T-cell (primary cell): ENCODE measurements at regions of chr3 and their contacts with region 1.

Region 1: GRCh38 chr3:45656575-45657363 is 32.4 kb upstream of the SACM1L start:
- DNase-seq: peak; percentile 67 to 92 (median 81)
- ATAC-seq: peak; percentile 83 to 94 (median 87)
- H3K4me3 ChIP-seq: no peak overlapping the region
- H3K4me3 Mint-ChIP-seq: no peak overlapping the region
- H3K27ac ChIP-seq: no peak overlapping the region
- H3K27ac Mint-ChIP-seq: no peak overlapping the region
- H3K4me1 ChIP-seq: peaks cover 0 to 5% of the 10 kb centered on the region in 2 experiments
- H3K4me1 Mint-ChIP-seq: peaks cover 16 to 33% (median 21%) of the 10 kb centered on the region in 3 donors
- H3K27me3 ChIP-seq: no peaks in the 10 kb centered on the region
- H3K27me3 Mint-ChIP-seq: no peaks in the 10 kb centered on the region

Region 2: DNA sequence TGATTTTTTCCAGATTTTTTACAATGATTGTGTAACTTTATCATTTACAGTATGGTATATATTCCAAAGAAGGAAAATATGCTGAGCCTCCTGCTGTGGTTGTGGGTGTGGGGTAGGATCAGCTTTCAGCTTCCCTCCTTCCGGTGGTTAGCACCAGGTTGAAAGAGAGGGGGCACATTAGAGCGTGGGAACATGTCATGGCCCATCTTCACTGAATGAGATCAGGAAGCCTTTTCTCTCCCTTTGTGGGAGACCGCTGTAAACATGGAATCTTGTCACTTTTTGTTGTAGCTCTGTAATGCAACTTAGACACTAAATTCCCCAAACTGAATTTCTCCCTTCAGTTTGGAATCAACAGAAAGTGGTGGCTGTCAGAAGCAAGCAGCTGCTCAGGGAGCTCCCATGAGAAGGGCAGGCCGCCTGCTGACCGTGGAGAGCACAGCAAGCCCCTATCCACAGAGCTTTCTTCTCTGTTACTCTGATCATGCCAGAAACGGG is 148.9 kb before region 1 on chr3:
- CTCF ChIA-PET with region 1: interaction called, 11 to 53 read pairs
- POLR2A ChIA-PET with region 1: no interaction called
- DNase-seq: no peak
- ATAC-seq: peak in 2 of 4 experiments; percentile 53 to 71
- H3K4me3 ChIP-seq: peak overlapping the region in 1 of 2 donors; percentile 32
- H3K4me3 Mint-ChIP-seq: no peak overlapping the region
- H3K27ac ChIP-seq: no peak overlapping the region
- H3K27ac Mint-ChIP-seq: no peak overlapping the region
- H3K4me1 ChIP-seq: peaks cover 5 to 23% of the 10 kb centered on the region in 2 experiments
- H3K4me1 Mint-ChIP-seq: peaks cover 3 to 10% (median 7%) of the 10 kb centered on the region in 3 donors
- H3K27me3 ChIP-seq: no peaks in the 10 kb centered on the region
- H3K27me3 Mint-ChIP-seq: no peaks in the 10 kb centered on the region

Region 3: DNA sequence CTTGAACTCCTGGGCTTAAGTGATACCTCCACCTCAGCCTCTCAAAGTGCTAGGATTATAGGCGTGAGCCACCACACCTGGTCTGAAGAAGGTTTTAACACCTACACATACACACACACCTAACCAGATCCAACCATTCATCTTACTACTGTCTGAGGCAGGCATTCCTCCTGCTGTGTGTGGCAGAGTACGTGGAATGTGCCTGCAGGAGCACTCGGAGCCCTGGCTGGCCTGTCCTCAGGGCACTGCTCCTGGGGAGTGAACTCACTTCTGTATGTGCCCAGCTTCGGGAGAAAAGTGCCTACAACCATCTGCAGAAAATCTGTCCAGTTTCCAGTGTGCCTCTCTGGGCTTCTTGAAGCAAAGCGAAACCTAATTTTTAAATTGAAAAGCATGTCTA is 120.4 kb before region 1 on chr3:
- CTCF ChIA-PET with region 1: no interaction called
- POLR2A ChIA-PET with region 1: no interaction called
- DNase-seq: no peak
- ATAC-seq: no peak
- H3K4me3 ChIP-seq: no peak overlapping the region
- H3K4me3 Mint-ChIP-seq: no peak overlapping the region
- H3K27ac ChIP-seq: no peak overlapping the region
- H3K27ac Mint-ChIP-seq: no peak overlapping the region
- H3K4me1 ChIP-seq: no peaks in the 10 kb centered on the region
- H3K4me1 Mint-ChIP-seq: no peaks in the 10 kb centered on the region
- H3K27me3 ChIP-seq: no peaks in the 10 kb centered on the region
- H3K27me3 Mint-ChIP-seq: no peaks in the 10 kb centered on the region

Region 4: GRCh38 chr3:45677033-45677433 is 20.3 kb after region 1 on chr3:
- CTCF ChIA-PET with region 1: interaction called, 8 to 11 read pairs
- POLR2A ChIA-PET with region 1: no interaction called
- DNase-seq: peak; percentile 51 to 83 (median 71)
- ATAC-seq: peak; percentile 97 to 100 (median 100)
- H3K4me3 ChIP-seq: peak overlapping the region; percentile 29 to 53
- H3K4me3 Mint-ChIP-seq: peak overlapping the region; percentile 58 to 76 (median 69)
- H3K27ac ChIP-seq: peak overlapping the region; percentile 81
- H3K27ac Mint-ChIP-seq: peak overlapping the region; percentile 96 to 98
- H3K4me1 ChIP-seq: peaks cover 18 to 26% of the 10 kb centered on the region in 2 experiments
- H3K4me1 Mint-ChIP-seq: peaks cover 16 to 31% (median 21%) of the 10 kb centered on the region in 3 donors
- H3K27me3 ChIP-seq: no peaks in the 10 kb centered on the region
- H3K27me3 Mint-ChIP-seq: no peaks in the 10 kb centered on the region

Region 5: GRCh38 chr3:45701172-45701867 is 44.6 kb after region 1 on chr3:
- CTCF ChIA-PET with region 1: interaction called, 4 to 17 read pairs
- POLR2A ChIA-PET with region 1: interaction called in 1 of 2 experiments, 3 read pairs
- DNase-seq: no peak
- ATAC-seq: no peak
- H3K4me3 ChIP-seq: no peak overlapping the region
- H3K4me3 Mint-ChIP-seq: no peak overlapping the region
- H3K27ac ChIP-seq: no peak overlapping the region
- H3K27ac Mint-ChIP-seq: peak overlapping the region in 1 of 2 donors; percentile 1
- H3K4me1 ChIP-seq: peaks cover 11 to 16% of the 10 kb centered on the region in 2 experiments
- H3K4me1 Mint-ChIP-seq: peaks cover 67 to 70% (median 67%) of the 10 kb centered on the region in 3 donors
- H3K27me3 ChIP-seq: no peaks in the 10 kb centered on the region
- H3K27me3 Mint-ChIP-seq: no peaks in the 10 kb centered on the region

Region 6: GRCh38 chr3:45907769-45908705 is 251.3 kb after region 1 on chr3:
- CTCF ChIA-PET with region 1: interaction called, 4 to 12 read pairs
- POLR2A ChIA-PET with region 1: no interaction called
- DNase-seq: peak in 10 of 35 experiments; percentile 6 to 55 (median 16)
- ATAC-seq: peak; percentile 83 to 92 (median 90)
- H3K4me3 ChIP-seq: no peak overlapping the region
- H3K4me3 Mint-ChIP-seq: peak overlapping the region in 1 of 3 donors; percentile 50
- H3K27ac ChIP-seq: no peak overlapping the region
- H3K27ac Mint-ChIP-seq: peak overlapping the region; percentile 60 to 66
- H3K4me1 ChIP-seq: peaks cover 17 to 35% of the 10 kb centered on the region in 2 experiments
- H3K4me1 Mint-ChIP-seq: peaks cover 33 to 55% (median 53%) of the 10 kb centered on the region in 3 donors
- H3K27me3 ChIP-seq: peaks cover 0 to 13% of the 10 kb centered on the region in 2 experiments
- H3K27me3 Mint-ChIP-seq: no peaks in the 10 kb centered on the region